Prostate gland (tissue), 2 donors: ENCODE measurements at regions of chr1 and their contacts with region 1.

Region 1: DNA sequence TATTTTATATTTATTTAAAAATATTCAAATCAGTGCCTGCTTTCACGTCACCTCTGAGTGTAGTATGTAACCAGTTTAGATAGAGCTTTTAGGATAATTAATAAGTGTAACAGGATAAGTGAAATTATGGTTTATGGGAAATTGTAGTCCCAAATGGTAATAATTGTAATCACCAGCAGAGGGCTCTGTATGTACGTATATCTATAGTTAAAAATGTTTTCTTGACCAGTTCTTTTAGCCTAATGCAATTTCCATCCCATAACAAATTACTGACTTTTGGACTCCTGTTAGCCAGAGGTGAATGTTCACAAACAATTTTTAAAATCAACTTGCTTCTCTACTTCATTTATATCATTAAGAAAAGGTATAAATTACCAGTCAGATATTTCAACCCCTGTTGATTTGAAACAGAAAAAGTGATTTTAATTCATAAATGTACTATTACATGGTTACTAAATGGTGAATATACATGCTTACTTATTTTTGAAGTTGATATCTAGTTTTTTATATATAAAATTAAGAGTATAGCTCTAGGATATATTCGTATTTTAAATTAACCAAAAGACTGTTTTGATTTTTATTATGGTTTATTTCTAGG is 25.3 kb downstream of the SLC30A7 start:
- DNase-seq: peak; percentile 18
- H3K4me3 ChIP-seq: no peak overlapping the region
- H3K27ac ChIP-seq: no peak overlapping the region
- H3K4me1 ChIP-seq: no peaks in the 10 kb centered on the region
- H3K27me3 ChIP-seq: no peaks in the 10 kb centered on the region
- CTCF ChIP-seq: peak; percentile 30 to 81 (median 74)
- POLR2A ChIP-seq: no peak

Region 2: GRCh38 chr1:101288491-101288944 is 367.3 kb after region 1 on chr1:
- intact Hi-C with region 1: loop called (anchors 2 kb)
- DNase-seq: peak; percentile 72
- H3K4me3 ChIP-seq: no peak overlapping the region
- H3K27ac ChIP-seq: no peak overlapping the region
- H3K4me1 ChIP-seq: no peaks in the 10 kb centered on the region
- H3K27me3 ChIP-seq: no peaks in the 10 kb centered on the region
- CTCF ChIP-seq: peak; percentile 60 to 94 (median 81)
- POLR2A ChIP-seq: no peak

Region 3: GRCh38 chr1:101309334-101310311 is 388.4 kb after region 1 on chr1:
- intact Hi-C with region 1: no loop called
- DNase-seq: peak; percentile 20
- H3K4me3 ChIP-seq: peak overlapping the region in 1 of 2 donors; percentile 5
- H3K27ac ChIP-seq: no peak overlapping the region
- H3K4me1 ChIP-seq: no peaks in the 10 kb centered on the region
- H3K27me3 ChIP-seq: no peaks in the 10 kb centered on the region
- CTCF ChIP-seq: peak; percentile 35 to 71 (median 68)
- POLR2A ChIP-seq: no peak